Sigmoid colon (tissue), 7 donors: ENCODE measurements at regions of chr19 and their contacts with region 1.

Region 1: GRCh38 chr19:48152551-48152950 is 17.6 kb downstream of the LIG1 start:
- DNase-seq: peak; percentile 74
- H3K4me3 ChIP-seq: no peak overlapping the region
- H3K27ac ChIP-seq: no peak overlapping the region
- H3K4me1 ChIP-seq: peaks cover 0 to 23% (median 18%) of the 10 kb centered on the region in 4 donors
- H3K27me3 ChIP-seq: no peaks in the 10 kb centered on the region
- CTCF ChIP-seq: peak; percentile 61 to 93 (median 82)
- EP300 ChIP-seq: no peak
- POLR2A ChIP-seq: no peak

Region 2: GRCh38 chr19:47973529-47973928 is 179.0 kb before region 1 on chr19:
- intact Hi-C with region 1: loop called (anchors 5 kb)
- DNase-seq: no peak
- H3K4me3 ChIP-seq: no peak overlapping the region
- H3K27ac ChIP-seq: no peak overlapping the region
- H3K4me1 ChIP-seq: no peaks in the 10 kb centered on the region
- H3K27me3 ChIP-seq: peaks cover 0 to 17% (median 0%) of the 10 kb centered on the region in 3 donors
- CTCF ChIP-seq: no peak
- EP300 ChIP-seq: no peak
- POLR2A ChIP-seq: no peak

Region 3: GRCh38 chr19:48110350-48110966 is 42.1 kb before region 1 on chr19 and contains the start of gene PLA2G4C:
- intact Hi-C with region 1: loop called (anchors 1 kb)
- DNase-seq: peak; percentile 96
- H3K4me3 ChIP-seq: peak within 1 kb of the TSS; percentile 30 to 56 (median 48)
- H3K27ac ChIP-seq: peak within 1 kb of the TSS; percentile 89 to 95 (median 94)
- H3K4me1 ChIP-seq: peaks cover 0 to 32% (median 28%) of the 10 kb centered on the region in 4 donors
- H3K27me3 ChIP-seq: no peaks in the 10 kb centered on the region
- CTCF ChIP-seq: no peak
- EP300 ChIP-seq: peak in 1 of 4 donors; percentile 75
- POLR2A ChIP-seq: peak; percentile 24 to 51
- total RNA-seq, gene PLA2G4C: 11.8 to 18.5 (median 13.1) TPM

Region 4: GRCh38 chr19:48170038-48170812 is 17.7 kb after region 1 on chr19 and contains the starts of genes LIG1 and ZSWIM9:
- intact Hi-C with region 1: no loop called
- DNase-seq: peak; percentile 94
- H3K4me3 ChIP-seq: peak within 1 kb of the TSS; percentile 70 to 84 (median 80)
- H3K27ac ChIP-seq: peak within 1 kb of the TSS; percentile 83 to 96 (median 87)
- H3K4me1 ChIP-seq: peaks cover 0 to 22% (median 16%) of the 10 kb centered on the region in 4 donors
- H3K27me3 ChIP-seq: no peaks in the 10 kb centered on the region
- CTCF ChIP-seq: no peak
- EP300 ChIP-seq: peak in 1 of 4 donors; percentile 63
- POLR2A ChIP-seq: no peak
- total RNA-seq, gene LIG1: 4.3 to 16.9 (median 6.5) TPM
- total RNA-seq, gene ZSWIM9: 2.4 to 10.0 (median 4.0) TPM